ENCODE measurements at regions of chr7 and their contacts with region 1.

Region 1: DNA sequence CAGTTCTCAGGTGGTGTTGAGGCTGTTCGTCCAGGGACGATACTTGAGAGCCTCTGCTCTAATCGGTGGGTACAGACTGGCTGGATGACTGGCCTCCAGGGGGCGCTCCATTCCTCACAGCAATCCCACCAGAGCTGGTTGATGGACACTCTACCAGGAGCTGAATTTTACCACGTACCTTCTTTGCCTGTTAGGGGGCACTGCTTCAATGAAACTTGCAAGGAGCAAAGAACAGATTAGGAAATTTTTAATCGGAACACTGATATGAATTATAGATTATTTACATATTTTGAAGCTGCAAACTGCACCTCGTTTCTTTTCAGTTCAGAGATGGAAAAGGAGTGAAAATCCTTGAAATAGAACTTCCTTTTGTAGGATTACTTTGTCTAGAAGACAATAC is 44.9 kb downstream of the KBTBD2 start:
- DNase-seq: peak; percentile 77
- H3K4me3 Mint-ChIP-seq: peak overlapping the region; percentile 14
- H3K27ac Mint-ChIP-seq: no peak overlapping the region
- H3K4me1 Mint-ChIP-seq: peaks cover 13% of the 10 kb centered on the region
- H3K27me3 Mint-ChIP-seq: peaks cover 26% of the 10 kb centered on the region

Region 2: DNA sequence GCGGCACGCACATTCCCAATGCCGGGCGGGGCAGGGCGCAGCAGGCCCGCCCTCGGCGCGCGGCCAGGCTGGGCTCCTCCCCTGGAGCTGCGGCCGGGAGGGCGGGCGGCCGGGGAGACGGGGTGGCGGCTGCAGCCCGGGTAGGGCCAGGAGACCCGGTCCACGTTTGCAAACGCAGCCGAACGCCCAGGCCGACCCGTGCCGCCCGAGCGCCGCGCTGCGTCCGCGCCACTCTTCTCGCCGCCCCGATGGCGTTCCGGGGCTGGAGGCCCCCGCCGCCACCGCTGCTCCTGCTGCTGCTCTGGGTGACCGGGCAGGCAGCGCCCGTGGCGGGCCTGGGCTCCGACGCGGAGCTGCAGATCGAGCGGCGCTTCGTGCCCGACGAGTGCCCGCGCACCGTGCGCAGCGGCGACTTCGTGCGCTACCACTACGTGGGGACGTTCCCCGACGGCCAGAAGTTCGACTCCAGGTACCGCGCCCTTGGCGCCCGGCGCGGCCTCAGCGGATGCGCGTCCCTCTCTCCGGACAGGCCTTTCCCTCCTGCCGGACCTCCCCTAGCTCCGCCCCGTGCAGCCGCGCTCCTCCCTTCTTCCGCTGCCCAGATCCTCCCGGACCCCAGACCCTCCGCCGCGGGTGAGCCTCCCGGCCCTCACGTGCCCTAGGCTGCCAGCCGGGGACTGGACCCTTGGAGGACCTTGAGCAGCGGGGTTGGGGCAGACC is 110.8 kb after region 1 on chr7 and contains the start of gene FKBP9:
- intact Hi-C with region 1: loop called (anchors 5 kb)
- DNase-seq: peak; percentile 14
- H3K4me3 Mint-ChIP-seq: peak within 1 kb of the TSS; percentile 83
- H3K27ac Mint-ChIP-seq: no peak within 1 kb of the TSS
- H3K4me1 Mint-ChIP-seq: peaks cover 4% of the 10 kb centered on the region
- H3K27me3 Mint-ChIP-seq: peaks cover 24% of the 10 kb centered on the region
- total RNA-seq, gene FKBP9: 3.0 and 3.5 TPM in 2 replicates

Region 3: DNA sequence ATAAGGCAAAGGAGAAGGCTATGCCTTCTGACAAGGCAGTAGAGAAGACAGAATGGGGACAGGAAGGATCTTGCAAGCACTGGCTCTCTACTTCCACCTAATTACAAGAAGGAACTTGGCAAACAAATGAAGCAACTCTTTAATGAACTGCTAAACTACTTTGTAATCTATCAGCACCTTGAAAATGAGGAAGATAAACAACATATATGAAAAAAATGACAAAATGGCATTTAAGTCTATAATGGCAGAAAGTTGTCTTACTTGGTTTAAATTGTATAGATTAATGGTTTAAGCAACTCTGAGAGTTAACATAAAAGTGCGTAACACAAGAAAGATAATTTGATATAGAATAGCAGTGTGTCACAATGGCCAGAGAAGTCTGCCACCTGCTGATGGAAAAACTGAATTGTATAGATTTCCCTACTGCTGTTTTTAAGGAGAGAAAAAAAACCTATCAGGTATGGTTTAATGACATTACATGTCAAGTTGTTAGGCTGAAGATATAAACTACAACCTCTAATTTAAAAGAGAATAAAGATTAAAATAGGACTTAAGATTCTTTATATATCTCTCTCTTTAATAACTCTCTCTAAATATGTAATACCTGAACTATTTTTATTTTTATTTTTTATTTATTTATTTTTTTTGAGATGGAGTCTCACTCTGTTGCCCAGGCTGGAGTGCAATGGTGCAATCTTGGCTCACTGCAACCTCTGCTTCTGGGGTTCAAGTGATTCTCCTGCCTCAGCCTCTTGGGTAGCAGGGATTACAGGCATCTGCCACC is 204.0 kb after region 1 on chr7:
- intact Hi-C with region 1: loop called (anchors 5 kb)
- DNase-seq: no peak
- H3K4me3 Mint-ChIP-seq: no peak overlapping the region
- H3K27ac Mint-ChIP-seq: no peak overlapping the region
- H3K4me1 Mint-ChIP-seq: peaks cover 41% of the 10 kb centered on the region
- H3K27me3 Mint-ChIP-seq: no peaks in the 10 kb centered on the region

Region 4: GRCh38 chr7:33351709-33352108 is 505.0 kb after region 1 on chr7:
- intact Hi-C with region 1: no loop called
- DNase-seq: no peak
- H3K4me3 Mint-ChIP-seq: no peak overlapping the region
- H3K27ac Mint-ChIP-seq: no peak overlapping the region
- H3K4me1 Mint-ChIP-seq: no peaks in the 10 kb centered on the region
- H3K27me3 Mint-ChIP-seq: no peaks in the 10 kb centered on the region

Measured in activated T-helper 2 cell treated with anti-CD3 and anti-CD28 coated beads, Interferon-gamma antibody, Interleukin-2, Interleukin-4, amounts not matched to agents 10 μg/mL and 5 μg/mL and 100 μg/mL, durations not matched to agents 14 hours and 24 hours and 36 hours (primary cell).